ENCODE measurements at regions of chr6 and their contacts with region 1.

Region 1: DNA sequence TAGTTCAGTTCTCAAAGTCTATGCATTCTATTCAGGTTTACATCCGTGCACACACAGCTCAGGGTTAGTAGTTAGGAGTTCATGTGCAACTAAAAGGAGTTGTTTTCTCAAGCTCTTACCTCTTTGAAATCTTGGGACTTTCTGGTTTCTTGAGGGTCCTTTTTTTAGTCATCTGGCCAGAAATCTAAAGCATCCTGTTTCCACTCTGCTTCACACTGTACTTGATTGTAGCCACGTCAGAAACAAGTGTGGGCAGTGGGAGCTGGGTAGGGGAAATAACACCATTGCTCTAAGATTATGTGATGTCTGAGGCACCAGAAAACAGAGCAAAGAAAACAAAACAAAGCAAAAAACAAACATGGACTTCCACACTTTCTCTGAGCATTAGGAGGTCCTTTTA is 58.3 kb downstream of the HDGFL1 start:
- DNase-seq: no peak
- H3K4me3 ChIP-seq: no peak overlapping the region
- H3K27ac ChIP-seq: no peak overlapping the region
- H3K4me1 ChIP-seq: peaks cover 2% of the 10 kb centered on the region
- H3K27me3 ChIP-seq: no peaks in the 10 kb centered on the region
- CTCF ChIP-seq: no peak
- EP300 ChIP-seq: no peak
- POLR2A ChIP-seq: no peak

Region 2: DNA sequence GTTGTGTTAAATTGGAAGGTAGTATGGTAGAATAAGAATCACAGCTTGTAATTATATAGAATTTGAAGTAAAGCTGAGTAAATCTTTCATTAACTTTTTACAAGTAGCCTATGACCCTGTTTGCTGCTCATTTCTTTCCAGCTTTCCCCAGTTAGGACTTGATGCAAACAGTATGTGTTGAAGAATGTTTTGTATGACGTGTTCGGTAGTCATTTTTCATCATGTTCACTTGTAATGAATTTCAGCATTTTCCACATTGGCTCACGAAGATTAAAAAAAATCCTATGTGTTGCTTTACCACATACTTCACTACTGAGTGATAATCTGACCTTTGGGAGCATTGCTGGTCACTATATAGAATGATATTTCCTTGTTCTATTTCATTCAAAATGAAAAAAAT is 1931.0 kb before region 1 on chr6:
- intact Hi-C with region 1: loop called in 1 of 4 experiments (anchors 5 kb)
- DNase-seq: no peak
- H3K4me3 ChIP-seq: no peak overlapping the region
- H3K27ac ChIP-seq: no peak overlapping the region
- H3K4me1 ChIP-seq: no peaks in the 10 kb centered on the region
- H3K27me3 ChIP-seq: no peaks in the 10 kb centered on the region
- CTCF ChIP-seq: no peak
- EP300 ChIP-seq: no peak
- POLR2A ChIP-seq: no peak

Region 3: GRCh38 chr6:22717915-22718314 is 90.3 kb after region 1 on chr6:
- intact Hi-C with region 1: no loop called
- DNase-seq: no peak
- H3K4me3 ChIP-seq: no peak overlapping the region
- H3K27ac ChIP-seq: no peak overlapping the region
- H3K4me1 ChIP-seq: no peaks in the 10 kb centered on the region
- H3K27me3 ChIP-seq: no peaks in the 10 kb centered on the region
- CTCF ChIP-seq: no peak
- EP300 ChIP-seq: no peak
- POLR2A ChIP-seq: no peak

Measured in ovary (tissue), 10 donors.